ENCODE measurements at regions of chr19 and their contacts with region 1.

Region 1: DNA sequence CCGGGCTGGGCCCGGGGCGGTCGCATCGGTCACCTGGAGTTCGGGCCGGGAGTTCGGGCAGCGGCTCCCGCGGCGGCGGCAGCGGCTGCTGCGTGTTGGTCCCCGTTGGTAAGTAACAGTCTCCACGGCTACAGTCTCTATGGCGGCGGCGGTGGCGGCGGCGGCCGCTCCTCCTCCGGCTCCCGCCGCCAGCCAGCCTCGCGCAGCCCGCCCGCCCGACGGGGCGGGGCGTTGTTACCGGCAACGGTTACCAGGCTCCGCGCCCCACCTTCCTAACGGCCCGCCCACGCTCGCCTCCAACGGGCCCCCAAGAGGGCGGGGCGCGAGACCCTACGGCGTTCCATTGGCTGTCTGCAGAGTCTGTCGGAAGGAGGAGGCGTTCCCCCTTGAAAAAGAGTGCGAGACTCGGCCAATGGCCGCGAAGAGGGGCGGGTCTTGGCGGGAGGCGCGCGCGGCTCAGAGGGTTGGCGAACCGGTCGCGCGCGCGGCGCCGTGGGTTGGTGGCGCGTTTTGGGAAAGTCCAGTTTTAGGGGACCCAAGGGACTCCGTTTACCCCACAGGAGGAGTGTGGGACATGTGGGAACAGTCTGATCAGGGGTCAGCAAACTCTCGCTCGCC is at the start of gene RFX2:
- DNase-seq: peak; percentile 99
- H3K4me3 Mint-ChIP-seq: peak within 1 kb of the TSS; percentile 90
- H3K27ac Mint-ChIP-seq: peak within 1 kb of the TSS; percentile 85
- H3K4me1 Mint-ChIP-seq: peaks cover 24% of the 10 kb centered on the region
- H3K27me3 Mint-ChIP-seq: peaks cover 11% of the 10 kb centered on the region
- total RNA-seq, gene RFX2: 8.7 and 12.5 TPM in 2 replicates

Region 2: GRCh38 chr19:6048808-6049405 is 61.6 kb before region 1 on chr19:
- intact Hi-C with region 1: no loop called
- DNase-seq: peak; percentile 65
- H3K4me3 Mint-ChIP-seq: no peak overlapping the region
- H3K27ac Mint-ChIP-seq: no peak overlapping the region
- H3K4me1 Mint-ChIP-seq: peaks cover 8% of the 10 kb centered on the region
- H3K27me3 Mint-ChIP-seq: peaks cover 5% of the 10 kb centered on the region

Region 3: DNA sequence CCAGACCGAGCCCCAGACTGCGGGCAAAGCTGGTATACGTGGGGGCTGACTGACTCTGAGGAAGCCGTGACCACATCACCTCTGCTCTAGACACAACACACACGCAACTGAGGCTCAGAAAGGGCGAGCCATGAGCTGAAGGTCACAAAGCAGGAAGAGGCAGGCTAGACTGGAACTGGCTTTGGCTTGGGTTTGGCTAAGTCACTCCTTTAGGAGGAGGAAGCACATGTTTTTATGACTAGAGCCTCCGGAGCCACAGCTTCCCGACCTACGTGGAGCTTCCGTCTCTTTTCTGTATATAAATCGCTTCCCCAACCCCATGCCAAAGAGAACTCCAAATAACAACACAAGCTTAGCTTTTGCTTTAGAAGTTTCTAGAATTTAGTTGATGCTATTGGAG is 48.2 kb before region 1 on chr19:
- intact Hi-C with region 1: loop called (anchors 2 kb)
- DNase-seq: no peak
- H3K4me3 Mint-ChIP-seq: no peak overlapping the region
- H3K27ac Mint-ChIP-seq: peak overlapping the region; percentile 68
- H3K4me1 Mint-ChIP-seq: peaks cover 63% of the 10 kb centered on the region
- H3K27me3 Mint-ChIP-seq: no peaks in the 10 kb centered on the region

Region 4: GRCh38 chr19:6199240-6199983 is 88.9 kb after region 1 on chr19:
- intact Hi-C with region 1: loop called (anchors 1 kb)
- DNase-seq: peak; percentile 98
- H3K4me3 Mint-ChIP-seq: peak overlapping the region; percentile 98
- H3K27ac Mint-ChIP-seq: peak overlapping the region; percentile 88
- H3K4me1 Mint-ChIP-seq: peaks cover 14% of the 10 kb centered on the region
- H3K27me3 Mint-ChIP-seq: peaks cover 3% of the 10 kb centered on the region